HepG2 (cell line): ENCODE measurements at regions of chr2 and their contacts with region 1.

Region 1: DNA sequence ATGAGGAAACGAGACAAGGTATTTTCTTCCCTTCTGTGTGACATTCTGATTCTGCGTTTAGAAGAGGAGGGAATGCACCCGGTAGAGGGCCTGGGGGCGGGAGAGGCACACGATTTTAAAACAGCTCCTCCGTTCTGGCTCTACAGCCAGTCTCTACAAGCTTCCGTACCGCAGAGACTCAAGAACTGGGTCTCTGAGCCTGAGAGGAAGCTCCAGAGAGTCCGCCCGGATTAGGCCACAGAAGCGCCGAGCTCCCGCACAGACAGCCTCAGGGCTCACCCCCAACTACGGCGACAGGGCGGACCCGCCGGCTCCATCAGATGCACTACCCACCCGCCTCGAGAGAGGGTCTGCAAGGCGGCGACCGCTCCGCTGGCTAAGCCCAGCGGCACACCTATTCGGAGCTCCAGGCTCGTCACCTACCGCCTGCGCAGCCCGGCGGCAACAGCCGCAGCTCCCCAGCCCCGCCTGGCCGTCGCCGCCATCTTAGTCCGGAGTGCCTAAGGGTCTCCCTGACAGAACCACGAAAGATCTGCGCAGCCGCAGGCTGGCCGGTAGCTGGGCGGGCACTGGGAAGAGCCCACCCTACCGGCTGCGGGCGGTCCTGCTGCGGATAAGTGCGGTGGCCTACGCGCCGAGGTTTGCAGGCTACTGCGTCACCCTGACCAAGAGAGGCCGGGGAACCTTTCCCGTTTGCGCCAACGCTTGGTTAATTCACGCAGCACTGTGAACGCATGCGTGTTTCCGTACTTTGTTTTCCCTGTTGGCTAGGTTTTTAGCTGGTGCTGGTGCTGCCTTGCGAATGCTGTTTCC is at the start of gene NFU1:
- DNase-seq: peak; percentile 95
- ATAC-seq: peak; percentile 98
- H3K4me3 ChIP-seq: peak within 1 kb of the TSS; percentile 75 to 94 (median 87)
- H3K27ac ChIP-seq: peak within 1 kb of the TSS; percentile 83
- H3K4me1 ChIP-seq: peaks cover 21% of the 10 kb centered on the region
- H3K27me3 ChIP-seq: no peaks in the 10 kb centered on the region; a peak in 1 of 5 replicates
- CTCF ChIP-seq: peak; percentile 93
- EP300 ChIP-seq: 0 out of 4 replicates have a peak, but pooled peaks of 1 of the 2 experiments have one; percentile 28
- POLR2A ChIP-seq: peak; percentile 95 to 96
- RAD21 ChIP-seq: peak; percentile 59
- total RNA-seq, gene NFU1: 84.0 and 99.6 TPM in 2 replicates

Region 2: GRCh38 chr2:69012310-69013141 is 424.6 kb before region 1 on chr2:
- CTCF ChIA-PET with region 1: no interaction called
- POLR2A ChIA-PET with region 1: no interaction called
- in situ Hi-C with region 1: no loop called
- intact Hi-C with region 1: loop called (anchors 10 kb)
- DNase-seq: peak; percentile 66
- ATAC-seq: peak; percentile 55
- H3K4me3 ChIP-seq: peak overlapping the region; percentile 67 to 94 (median 72)
- H3K27ac ChIP-seq: no peak overlapping the region
- H3K4me1 ChIP-seq: peaks cover 36% of the 10 kb centered on the region
- H3K27me3 ChIP-seq: peaks cover 0 to 16% of the 10 kb centered on the region in 2 experiments; a peak in 3 of 5 replicates
- CTCF ChIP-seq: peak; percentile 84
- EP300 ChIP-seq: no peak
- POLR2A ChIP-seq: no peak
- RAD21 ChIP-seq: no peak

Region 3: DNA sequence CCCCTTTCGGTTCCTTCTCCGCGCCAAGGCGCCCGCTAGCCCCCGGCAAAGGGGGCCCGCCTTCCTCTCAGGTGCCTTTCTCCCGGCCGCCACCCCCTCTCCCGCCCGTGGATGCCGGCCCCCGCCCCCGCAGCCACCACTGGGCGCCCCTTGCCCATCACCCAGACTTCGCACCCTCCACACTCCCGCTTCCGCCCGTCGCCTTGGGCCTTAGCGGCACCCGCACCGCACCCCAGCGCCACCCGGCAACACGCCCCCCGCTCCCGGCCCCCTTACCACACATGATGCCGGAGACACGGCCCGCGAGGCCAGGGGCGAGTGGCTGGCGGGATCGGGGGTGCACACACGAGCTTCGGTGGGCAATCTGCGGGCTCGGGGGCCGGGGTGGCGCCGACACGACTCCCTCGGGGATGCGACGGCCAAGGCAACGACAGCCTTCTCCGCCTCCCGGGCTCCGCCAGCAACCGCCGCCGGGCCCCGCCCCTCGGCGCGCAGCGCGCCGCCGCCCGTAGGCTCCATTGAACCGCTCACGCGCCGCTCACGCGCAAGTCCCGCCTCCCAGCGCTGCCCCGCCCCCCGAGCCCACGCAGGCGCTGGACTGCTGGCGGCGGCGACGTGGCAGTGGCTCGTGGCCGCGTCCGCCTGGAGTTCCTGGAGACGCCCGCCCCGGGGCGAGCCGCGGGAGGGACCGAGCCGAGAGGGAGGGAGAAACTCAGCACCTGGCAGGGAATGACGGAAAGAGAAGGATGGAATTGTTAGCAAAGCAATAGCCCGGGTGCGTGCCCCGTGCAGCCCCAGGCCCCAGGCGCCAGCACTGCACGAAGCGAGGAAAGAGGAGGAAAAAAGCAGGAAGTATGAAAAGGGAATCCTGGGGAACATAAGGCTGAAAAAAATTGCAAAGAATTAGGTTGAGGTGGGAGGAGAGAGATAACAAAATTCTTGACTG is 50.1 kb before region 1 on chr2 and contains the start of gene GFPT1:
- CTCF ChIA-PET with region 1: no interaction called
- POLR2A ChIA-PET with region 1: interaction called, 20 read pairs
- in situ Hi-C with region 1: no loop called
- intact Hi-C with region 1: loop called (anchors 2 kb)
- DNase-seq: peak; percentile 90
- ATAC-seq: peak; percentile 93
- H3K4me3 ChIP-seq: peak within 1 kb of the TSS; percentile 79 to 99 (median 93)
- H3K27ac ChIP-seq: peak within 1 kb of the TSS; percentile 80
- H3K4me1 ChIP-seq: peaks cover 54% of the 10 kb centered on the region
- H3K27me3 ChIP-seq: no peaks in the 10 kb centered on the region; a peak in 1 of 5 replicates
- CTCF ChIP-seq: peak; percentile 19
- EP300 ChIP-seq: peak in 1 of 2 experiments; percentile 59; a peak in 1 of 4 replicates
- POLR2A ChIP-seq: peak; percentile 84 to 98
- RAD21 ChIP-seq: peak; percentile 68
- total RNA-seq, gene GFPT1: 84.9 and 129 TPM in 2 replicates

Region 4: DNA sequence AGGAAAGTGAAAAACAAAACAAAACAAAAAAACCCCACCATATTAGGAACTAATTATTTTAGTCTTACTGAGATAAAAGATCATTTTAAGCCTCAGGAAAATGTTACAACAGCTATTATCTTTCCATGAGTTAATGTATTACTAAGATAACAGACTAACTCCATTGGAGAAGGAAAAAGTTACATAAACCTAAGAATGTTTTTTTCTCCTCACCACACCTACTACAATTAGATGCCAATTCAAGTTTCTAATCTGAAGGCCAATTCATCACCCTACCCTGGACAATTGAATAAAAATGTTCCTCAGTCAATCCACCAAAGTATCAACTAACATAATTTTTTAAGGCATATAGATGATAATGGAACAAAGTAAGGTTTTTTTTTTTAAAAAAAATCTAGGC is 39.9 kb before region 1 on chr2:
- CTCF ChIA-PET with region 1: no interaction called
- POLR2A ChIA-PET with region 1: interaction called, 19 read pairs
- in situ Hi-C with region 1: no loop called
- intact Hi-C with region 1: no loop called
- DNase-seq: peak; percentile 13
- ATAC-seq: peak; percentile 44; the same call in 2 of the 3 replicates
- H3K4me3 ChIP-seq: no peak overlapping the region
- H3K27ac ChIP-seq: no peak overlapping the region
- H3K4me1 ChIP-seq: peaks cover 14% of the 10 kb centered on the region
- H3K27me3 ChIP-seq: no peaks in the 10 kb centered on the region
- CTCF ChIP-seq: no peak
- EP300 ChIP-seq: no peak
- POLR2A ChIP-seq: no peak
- RAD21 ChIP-seq: no peak

Region 5: GRCh38 chr2:69453475-69454129 is 16.5 kb after region 1 on chr2:
- CTCF ChIA-PET with region 1: no interaction called
- POLR2A ChIA-PET with region 1: interaction called, 10 read pairs
- in situ Hi-C with region 1: no loop called
- intact Hi-C with region 1: no loop called
- DNase-seq: no peak
- ATAC-seq: peak; percentile 25; the same call in 1 of the 3 replicates
- H3K4me3 ChIP-seq: no peak overlapping the region
- H3K27ac ChIP-seq: no peak overlapping the region
- H3K4me1 ChIP-seq: 0 out of 2 replicates have a peak, but pooled peaks cover 9% of the 10 kb centered on the region
- H3K27me3 ChIP-seq: no peaks in the 10 kb centered on the region
- CTCF ChIP-seq: no peak
- EP300 ChIP-seq: no peak
- POLR2A ChIP-seq: no peak
- RAD21 ChIP-seq: no peak